Posterior cingulate gyrus (tissue), 11 donors: ENCODE measurements at regions of chr1 and their contacts with region 1.

Region 1: DNA sequence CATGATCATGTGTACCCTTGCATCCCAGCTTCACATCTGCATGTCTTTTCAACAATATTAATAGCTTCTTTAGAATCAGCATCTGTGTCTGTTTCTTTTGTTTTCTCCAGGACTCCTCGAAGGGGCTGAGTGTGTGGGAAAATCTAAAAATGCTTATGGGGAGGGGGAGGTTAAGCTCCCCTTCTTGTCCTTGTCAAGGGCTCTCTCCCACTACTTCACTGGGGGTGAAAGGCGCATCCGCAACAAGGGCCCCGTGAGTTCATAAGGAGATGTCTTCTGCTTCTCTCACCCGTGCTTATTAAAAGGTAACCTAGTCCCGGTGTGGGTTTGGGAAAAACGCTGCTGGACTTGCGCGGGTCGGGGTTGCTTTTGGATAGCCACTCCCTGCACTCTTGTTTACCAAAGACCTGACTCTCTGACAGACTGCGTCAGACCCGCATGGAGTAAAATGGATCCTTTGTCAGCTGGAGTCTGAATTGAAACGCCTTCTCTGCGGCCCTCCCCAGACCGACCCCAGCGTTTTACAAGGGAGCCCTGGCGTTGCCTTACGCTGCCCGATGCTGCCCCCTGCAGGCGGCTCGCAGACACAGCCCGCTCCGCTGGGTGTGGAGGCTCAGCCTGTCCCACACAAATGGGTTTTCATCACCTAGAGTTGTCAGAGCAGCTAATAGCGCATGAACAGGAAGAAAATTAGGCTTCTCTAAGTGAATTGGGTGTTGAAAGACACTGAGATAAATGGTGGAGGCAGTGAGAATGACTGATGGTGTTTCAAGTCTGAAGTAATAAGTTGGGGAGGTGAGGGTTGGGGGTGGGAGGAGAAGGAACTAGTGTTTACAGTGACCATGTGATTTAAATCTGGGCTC is 53.8 kb downstream of the IER5 start:
- DNase-seq: peak; percentile 88 to 99 (median 95)

Region 2: GRCh38 chr1:180515864-180516388 is 626.4 kb before region 1 on chr1:
- intact Hi-C with region 1: loop called (anchors 10 kb)
- DNase-seq: peak in 9 of 10 donors; percentile 28 to 95 (median 69)

Region 3: DNA sequence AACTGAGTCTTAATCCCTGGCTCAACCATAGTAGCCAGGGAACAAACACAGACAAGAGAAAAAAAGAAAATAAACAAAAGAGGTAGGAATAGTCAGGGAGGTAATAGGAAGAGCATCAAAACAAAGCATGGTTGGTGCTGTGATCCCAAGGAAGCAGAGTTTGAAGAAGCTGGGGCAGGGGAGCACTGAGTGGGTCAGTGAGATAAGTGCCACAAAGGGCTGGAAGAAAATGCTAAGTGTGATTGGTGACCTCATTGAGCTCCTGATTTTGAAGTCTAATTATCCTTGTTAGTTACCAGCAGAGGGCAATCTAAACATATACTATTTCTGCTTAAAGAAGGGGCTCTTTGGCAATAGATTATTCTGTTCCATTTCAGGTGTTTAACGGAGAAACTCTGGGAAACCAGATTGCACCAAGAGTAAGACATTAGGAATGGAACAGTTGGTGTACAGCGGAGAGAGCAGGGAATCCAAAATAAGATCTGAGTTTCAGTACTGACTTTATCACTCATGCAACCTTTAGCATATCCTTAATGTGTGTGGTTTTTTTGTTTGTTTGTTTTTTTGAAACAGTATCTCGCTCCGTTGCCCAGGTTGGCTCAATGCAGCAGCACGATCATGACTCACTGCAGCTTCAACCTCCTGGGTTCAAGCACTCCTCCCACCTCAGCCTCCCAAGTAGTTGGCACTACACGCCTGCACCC is 260.4 kb before region 1 on chr1:
- intact Hi-C with region 1: loop called (anchors 1 kb)
- DNase-seq: peak in 1 of 10 donors; percentile 51

Region 4: DNA sequence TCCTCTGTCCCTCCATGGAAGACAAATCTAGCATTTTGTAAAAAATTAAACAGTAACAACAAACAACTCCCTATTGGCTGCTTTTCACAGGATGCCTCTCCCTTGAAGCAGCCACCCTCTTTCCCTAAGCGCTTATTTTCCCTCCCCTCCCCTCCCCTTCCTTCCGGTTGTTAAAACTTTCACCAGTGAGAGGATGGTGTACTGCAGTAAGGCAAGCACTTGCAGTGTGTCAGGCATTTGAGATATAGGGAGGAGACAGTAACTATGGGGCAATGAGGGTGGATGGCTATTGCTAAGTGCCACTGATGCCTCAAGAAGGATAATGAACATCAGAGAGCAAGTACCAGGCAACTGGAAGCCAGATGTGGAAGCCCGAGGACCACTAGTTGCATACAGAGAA is 248.7 kb before region 1 on chr1:
- intact Hi-C with region 1: no loop called
- DNase-seq: no peak

Region 5: GRCh38 chr1:181038399-181038873 is 103.9 kb before region 1 on chr1:
- intact Hi-C with region 1: loop called (anchors 1 kb)
- DNase-seq: peak in 4 of 10 donors; percentile 52 to 87 (median 56)

Region 6: DNA sequence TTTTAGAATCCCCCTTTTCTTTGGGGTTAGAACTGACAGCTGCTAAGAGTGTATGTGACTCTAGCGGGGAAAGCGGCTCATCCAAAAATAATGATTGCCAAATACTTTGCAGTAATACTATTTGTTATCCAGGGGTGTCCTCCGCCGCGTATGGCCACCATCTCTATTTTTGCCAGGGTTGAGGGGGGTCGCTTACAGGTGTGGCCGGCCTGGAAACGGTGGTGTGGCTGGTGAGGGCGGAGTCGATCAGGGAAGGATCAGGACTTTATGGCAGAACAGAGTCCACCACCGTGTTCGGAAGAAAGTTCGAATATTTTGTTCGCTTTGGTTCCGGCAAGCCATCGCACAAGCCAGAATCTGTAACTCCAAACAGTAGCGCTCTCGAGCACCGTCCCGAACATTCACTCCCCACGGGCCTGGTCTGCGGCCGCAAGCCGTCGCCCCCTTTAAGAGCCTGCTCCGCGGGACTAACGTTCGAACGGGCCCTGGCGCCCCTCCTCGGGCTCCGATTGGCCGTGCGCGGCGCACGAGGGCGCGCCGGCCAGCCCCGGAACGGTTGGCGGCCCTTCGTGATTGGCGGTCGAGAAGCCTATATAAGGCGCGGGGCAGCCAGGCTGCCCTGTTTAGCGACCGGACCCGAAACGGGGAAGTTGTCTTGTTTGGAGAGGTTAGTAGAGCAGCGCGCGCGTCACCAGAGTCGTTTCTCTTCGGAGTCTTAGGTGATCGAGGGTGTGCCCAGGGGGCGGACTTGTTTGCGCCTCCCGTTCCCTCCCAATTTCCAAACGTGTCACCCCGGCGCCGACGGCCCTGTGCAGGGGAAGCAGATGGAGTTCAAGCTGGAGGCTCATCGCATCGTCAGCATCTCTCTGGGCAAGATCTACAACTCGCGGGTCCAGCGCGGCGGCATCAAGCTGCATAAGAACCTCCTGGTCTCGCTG is 54.0 kb before region 1 on chr1 and contains the start of gene IER5:
- intact Hi-C with region 1: loop called (anchors 2 kb)
- DNase-seq: peak; percentile 92 to 99 (median 97)

Region 7: DNA sequence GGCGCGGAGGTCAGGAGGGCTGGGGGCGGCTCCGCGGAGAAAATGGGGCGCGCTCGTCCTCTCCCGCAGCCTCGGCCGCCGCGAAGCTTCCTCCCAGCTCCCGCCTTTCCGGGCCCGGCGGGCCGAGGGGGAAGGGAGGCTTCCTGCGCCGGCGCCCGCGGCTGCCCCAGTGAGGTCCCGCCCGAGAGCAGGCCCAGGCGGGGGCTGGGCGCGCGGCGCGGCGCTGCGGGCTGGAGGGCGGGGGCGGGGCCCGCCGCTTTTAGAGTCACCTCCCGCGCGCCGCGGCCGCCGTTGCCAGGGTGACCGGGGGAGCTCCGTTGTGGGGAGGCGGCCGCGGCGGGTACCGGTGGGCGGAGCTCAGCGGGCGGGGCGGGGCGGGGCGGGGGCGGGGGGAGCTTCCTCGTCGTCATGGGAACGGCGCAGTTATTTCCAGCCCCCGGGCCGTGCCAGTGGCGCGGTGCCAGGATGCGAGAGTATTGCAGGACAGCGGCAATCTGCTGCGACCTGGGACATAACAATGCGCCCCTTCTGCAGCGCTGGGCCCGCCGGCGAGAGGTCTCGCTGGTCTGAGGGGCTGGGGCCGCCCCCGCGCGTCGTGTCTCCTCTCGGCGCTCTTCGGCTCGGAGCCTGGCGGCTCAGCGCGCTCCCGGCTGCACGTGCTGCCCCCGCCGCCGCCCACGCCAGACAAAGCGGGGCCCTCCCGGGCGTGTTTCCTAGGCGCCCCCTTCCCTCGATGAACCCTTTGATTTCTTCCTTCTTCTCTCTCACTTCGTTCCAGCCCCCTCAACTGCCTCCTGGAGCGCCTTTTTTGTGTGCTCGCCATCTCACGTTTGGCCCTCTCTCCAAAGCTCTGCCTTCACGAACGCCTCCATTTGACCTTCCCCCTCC is 36.9 kb before region 1 on chr1:
- intact Hi-C with region 1: loop called (anchors 5 kb)
- DNase-seq: peak; percentile 78 to 99 (median 91)